AG04449 (cell line): ENCODE measurements at regions of chr10 and their contacts with region 1.

Region 1: GRCh38 chr10:122112625-122113160 is 123.7 kb downstream of the TACC2 start:
- DNase-seq: peak; percentile 57
- H3K4me3 ChIP-seq: peak overlapping the region; percentile 74
- CTCF ChIP-seq: peak; percentile 54

Region 2: GRCh38 chr10:121994390-121994961 is 118.2 kb before region 1 on chr10:
- CTCF ChIA-PET with region 1: no interaction called
- POLR2A ChIA-PET with region 1: no interaction called
- DNase-seq: no peak
- H3K4me3 ChIP-seq: no peak overlapping the region
- CTCF ChIP-seq: no peak

Region 3: GRCh38 chr10:122126763-122127659 is 14.3 kb after region 1 on chr10:
- CTCF ChIA-PET with region 1: interaction called, 10 read pairs
- POLR2A ChIA-PET with region 1: interaction called, 6 read pairs
- DNase-seq: peak; percentile 73
- H3K4me3 ChIP-seq: no peak overlapping the region
- CTCF ChIP-seq: no peak